A549 (cell line): ENCODE measurements at regions of chr3 and their contacts with region 1.

Region 1: DNA sequence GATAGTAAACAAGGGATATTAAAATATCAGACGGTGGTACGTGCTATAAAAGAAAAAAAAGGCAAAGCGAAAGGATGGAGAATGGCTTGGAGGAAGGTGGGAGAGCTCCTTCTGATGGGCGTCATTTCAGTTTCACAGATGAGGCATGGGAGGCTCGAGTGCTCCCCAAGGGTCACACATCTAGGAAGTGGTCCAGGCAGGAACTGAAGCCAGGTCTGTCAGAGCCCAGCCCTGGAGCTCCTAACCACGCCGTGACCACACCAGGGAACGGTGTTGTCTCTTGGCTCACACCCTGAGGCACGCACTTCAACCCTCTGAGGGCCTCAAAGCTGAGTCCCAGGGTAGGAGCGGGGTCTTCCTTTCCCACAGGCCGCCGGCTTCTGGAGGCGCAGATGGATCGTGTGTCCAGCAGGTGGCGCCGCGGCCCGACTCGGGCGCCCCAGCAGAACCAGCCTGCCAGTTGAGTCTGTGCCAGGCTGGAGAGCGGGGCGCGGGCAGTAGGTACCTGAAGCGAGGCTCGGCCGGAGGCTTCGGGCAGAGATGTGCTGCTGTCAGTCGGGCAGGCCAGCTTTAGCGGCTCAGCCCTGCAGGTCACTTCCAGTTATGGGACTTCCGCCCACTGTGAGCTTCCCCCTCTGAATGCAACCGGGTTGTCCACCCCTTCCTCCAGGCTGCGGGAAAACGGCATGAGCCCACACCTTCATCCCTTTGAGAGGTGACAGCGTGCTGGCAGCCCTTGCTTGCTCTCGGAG is 68.1 kb downstream of the SLC6A1 start:
- DNase-seq: peak; percentile 71 to 75
- ATAC-seq: peak; percentile 87 to 93
- H3K4me3 ChIP-seq: peak overlapping the region; percentile 42
- H3K27ac ChIP-seq: peak overlapping the region; percentile 45 to 78
- H3K4me1 ChIP-seq: peaks cover 8% of the 10 kb centered on the region; the same call in 1 of the 3 replicates
- CTCF ChIP-seq: peak; percentile 94
- EP300 ChIP-seq: no peak
- POLR2A ChIP-seq: no peak
- RAD21 ChIP-seq: peak; percentile 79 to 90

Region 2: DNA sequence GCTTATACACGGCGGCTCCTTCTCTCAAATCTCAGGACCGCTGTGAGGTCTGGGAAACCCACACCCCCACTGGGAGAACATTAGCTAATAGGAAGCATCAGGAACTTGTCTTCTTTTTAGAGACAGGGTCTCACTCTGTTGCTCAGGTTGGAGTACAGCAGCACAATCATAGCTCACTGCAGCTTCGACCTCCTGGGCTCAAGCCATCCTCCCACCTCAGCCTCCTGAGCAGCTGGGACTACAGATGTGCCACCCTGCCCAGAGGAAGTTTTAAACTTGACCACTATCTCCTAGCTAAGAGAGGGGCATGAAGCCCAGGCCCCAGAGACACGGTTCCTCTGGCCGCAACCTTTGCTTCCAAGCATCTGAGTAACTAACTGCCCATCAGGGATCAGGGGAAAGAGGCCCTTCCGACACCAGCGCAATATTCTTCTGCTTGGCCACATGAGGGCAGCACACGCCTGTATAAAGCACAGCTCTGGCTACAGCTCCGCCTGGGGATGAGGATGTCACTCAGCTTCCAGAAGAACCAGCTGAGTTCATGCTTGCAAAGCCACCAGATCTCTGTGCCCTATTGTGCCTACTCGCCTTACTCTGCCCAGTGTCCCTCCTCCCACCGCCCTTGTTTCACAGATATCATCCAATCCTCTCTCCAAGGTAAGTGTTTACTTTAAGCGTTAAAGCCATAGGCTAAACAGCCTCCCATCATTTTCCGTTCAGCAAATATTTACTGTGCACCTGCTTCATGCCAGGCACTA is 302.2 kb before region 1 on chr3:
- CTCF ChIA-PET with region 1: interaction called, 297 read pairs
- POLR2A ChIA-PET with region 1: no interaction called
- DNase-seq: peak; percentile 74 to 87
- ATAC-seq: peak; percentile 86 to 99
- H3K4me3 ChIP-seq: no peak overlapping the region
- H3K27ac ChIP-seq: no peak overlapping the region
- H3K4me1 ChIP-seq: no peaks in the 10 kb centered on the region
- CTCF ChIP-seq: peak; percentile 81
- EP300 ChIP-seq: no peak
- POLR2A ChIP-seq: no peak
- RAD21 ChIP-seq: peak; percentile 90 to 96

Region 3: DNA sequence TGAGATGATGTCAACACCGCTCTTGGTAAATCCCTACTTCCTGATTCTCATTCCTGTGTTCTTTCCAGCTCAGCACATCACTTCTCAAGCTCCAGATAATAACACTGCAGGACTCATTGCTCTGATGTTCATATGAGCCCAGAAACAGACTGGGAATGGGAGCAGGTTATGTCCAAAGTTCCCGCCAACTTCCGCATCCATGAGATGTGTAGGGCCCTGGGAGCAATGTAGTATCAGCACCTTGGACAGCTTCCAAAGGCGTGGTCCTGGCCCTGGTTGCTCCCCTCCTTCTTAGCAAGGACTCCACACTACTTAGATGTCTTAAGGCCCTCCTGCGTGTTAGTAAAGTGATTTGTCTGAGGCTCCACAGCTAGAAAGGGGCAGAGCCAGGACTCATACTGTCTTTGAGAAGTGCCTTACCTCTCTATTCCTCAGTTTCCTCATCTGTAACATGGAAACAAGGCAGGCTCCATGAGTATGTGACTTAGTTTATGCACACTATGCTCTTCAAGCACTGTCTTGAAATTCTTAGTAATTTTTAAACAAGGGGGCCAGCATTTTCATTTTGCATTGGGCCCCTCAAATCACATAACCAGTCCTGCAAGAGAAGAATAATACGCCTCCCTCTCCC is 96.0 kb before region 1 on chr3:
- CTCF ChIA-PET with region 1: interaction called, 24 read pairs
- POLR2A ChIA-PET with region 1: no interaction called
- DNase-seq: no peak
- ATAC-seq: peak in 1 of 2 experiments; percentile 64; a peak in 3 of 6 replicates
- H3K4me3 ChIP-seq: no peak overlapping the region
- H3K27ac ChIP-seq: no peak overlapping the region
- H3K4me1 ChIP-seq: no peaks in the 10 kb centered on the region
- CTCF ChIP-seq: no peak
- EP300 ChIP-seq: no peak
- POLR2A ChIP-seq: no peak
- RAD21 ChIP-seq: no peak

Region 4: GRCh38 chr3:11001020-11001656 is 59.5 kb before region 1 on chr3:
- CTCF ChIA-PET with region 1: interaction called, 16 read pairs
- POLR2A ChIA-PET with region 1: no interaction called
- DNase-seq: peak in 1 of 2 experiments; percentile 14
- ATAC-seq: peak in 1 of 2 experiments; percentile 20; a peak in 2 of 6 replicates
- H3K4me3 ChIP-seq: no peak overlapping the region
- H3K27ac ChIP-seq: no peak overlapping the region
- H3K4me1 ChIP-seq: peaks cover 24% of the 10 kb centered on the region
- CTCF ChIP-seq: no peak
- EP300 ChIP-seq: no peak
- POLR2A ChIP-seq: no peak
- RAD21 ChIP-seq: no peak

Region 5: DNA sequence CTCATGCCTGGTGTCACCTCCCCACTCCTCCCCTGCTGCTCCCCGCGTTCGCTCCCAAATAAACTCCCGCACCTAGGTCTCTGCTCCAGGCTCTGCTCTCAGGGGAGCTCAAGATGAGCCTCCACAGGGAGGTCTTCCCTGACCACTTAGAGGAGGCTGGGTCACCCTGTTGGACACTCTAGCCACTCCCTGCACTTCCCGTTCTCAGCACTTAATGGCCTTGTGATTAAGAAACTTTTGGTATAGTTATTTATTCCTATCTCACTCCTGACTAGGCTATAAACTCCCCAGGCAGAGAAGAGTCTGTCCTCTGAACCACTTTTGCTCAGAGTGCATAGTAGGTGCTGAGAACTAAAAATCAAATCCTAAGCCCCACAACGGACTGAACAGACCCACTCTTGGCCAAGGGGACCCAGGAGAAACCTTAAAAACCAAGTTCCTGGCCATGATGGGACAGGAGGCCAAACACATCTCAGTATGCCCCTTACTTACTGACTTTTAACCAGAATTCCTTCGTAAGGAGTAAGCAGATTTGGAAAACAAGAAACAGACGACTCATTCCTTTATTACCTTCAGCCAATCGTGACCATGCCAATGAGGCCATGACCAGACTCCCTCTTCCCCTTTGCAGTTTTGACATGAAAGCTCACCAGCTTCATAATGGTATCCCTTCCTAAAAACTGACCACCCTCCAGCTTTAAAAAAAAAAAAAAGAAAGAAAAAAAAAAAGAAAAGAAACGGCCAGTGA is 24.6 kb after region 1 on chr3:
- CTCF ChIA-PET with region 1: interaction called, 23 read pairs
- POLR2A ChIA-PET with region 1: no interaction called
- DNase-seq: no peak
- ATAC-seq: no peak
- H3K4me3 ChIP-seq: no peak overlapping the region
- H3K27ac ChIP-seq: 0 out of 6 replicates have a peak overlapping the region, but pooled peaks of 1 of the 2 experiments have one; percentile 6
- H3K4me1 ChIP-seq: peaks cover 20% of the 10 kb centered on the region
- CTCF ChIP-seq: no peak
- EP300 ChIP-seq: no peak
- POLR2A ChIP-seq: no peak
- RAD21 ChIP-seq: no peak

Region 6: DNA sequence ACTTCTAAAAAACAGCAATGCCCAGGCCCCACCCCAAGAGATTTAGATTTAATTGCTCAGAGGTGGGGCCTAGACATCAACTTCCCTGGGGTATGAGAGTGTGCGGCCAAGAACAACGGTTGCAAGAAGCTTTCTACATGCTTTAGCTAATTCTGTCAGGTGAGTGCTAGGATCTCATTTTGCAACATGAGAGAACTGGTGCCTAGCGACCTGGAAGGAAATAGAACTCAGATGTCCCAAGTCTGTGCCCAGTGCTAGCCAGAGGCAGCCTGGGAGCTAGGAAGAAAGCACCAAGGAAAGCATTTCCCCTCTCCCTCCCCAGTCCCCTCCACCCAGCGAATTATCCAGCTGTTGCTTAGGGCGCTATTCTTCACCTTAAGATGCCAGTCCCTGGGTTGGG is 70.7 kb after region 1 on chr3:
- CTCF ChIA-PET with region 1: interaction called, 21 read pairs
- POLR2A ChIA-PET with region 1: no interaction called
- DNase-seq: no peak
- ATAC-seq: no peak
- H3K4me3 ChIP-seq: no peak overlapping the region
- H3K27ac ChIP-seq: peak overlapping the region; percentile 4 to 28; a peak in 2 of 6 replicates
- H3K4me1 ChIP-seq: peaks cover 6% of the 10 kb centered on the region
- CTCF ChIP-seq: no peak
- EP300 ChIP-seq: no peak
- POLR2A ChIP-seq: no peak
- RAD21 ChIP-seq: no peak

Region 7: GRCh38 chr3:11211531-11212298 is 151.0 kb after region 1 on chr3:
- CTCF ChIA-PET with region 1: interaction called, 22 read pairs
- POLR2A ChIA-PET with region 1: no interaction called
- DNase-seq: no peak
- ATAC-seq: peak; percentile 69 to 74
- H3K4me3 ChIP-seq: no peak overlapping the region
- H3K27ac ChIP-seq: peak overlapping the region; percentile 55 to 69
- H3K4me1 ChIP-seq: peaks cover 39% of the 10 kb centered on the region
- CTCF ChIP-seq: no peak
- EP300 ChIP-seq: no peak
- POLR2A ChIP-seq: no peak
- RAD21 ChIP-seq: no peak

Region 8: DNA sequence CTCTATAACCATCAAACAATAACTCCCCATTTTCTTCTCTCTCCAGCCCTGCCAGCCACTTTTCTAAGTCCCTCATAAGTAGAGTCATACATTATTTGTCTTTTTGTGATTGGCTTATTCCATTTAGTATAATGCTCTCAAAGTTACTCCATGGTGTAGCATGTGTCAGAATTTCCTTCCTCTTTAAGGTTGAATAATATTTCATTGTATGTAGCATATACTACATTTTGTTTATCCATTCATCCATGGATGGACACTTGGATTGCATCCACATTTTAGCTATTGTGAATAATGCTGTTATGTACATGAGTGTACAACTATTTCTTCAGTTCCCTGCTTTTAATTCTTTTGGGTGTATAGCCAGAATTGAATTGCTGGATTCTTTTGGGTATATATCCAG is 349.9 kb after region 1 on chr3:
- CTCF ChIA-PET with region 1: no interaction called
- POLR2A ChIA-PET with region 1: no interaction called
- DNase-seq: no peak
- ATAC-seq: no peak
- H3K4me3 ChIP-seq: no peak overlapping the region
- H3K27ac ChIP-seq: no peak overlapping the region
- H3K4me1 ChIP-seq: no peaks in the 10 kb centered on the region
- CTCF ChIP-seq: no peak
- EP300 ChIP-seq: no peak
- POLR2A ChIP-seq: no peak
- RAD21 ChIP-seq: no peak